ENCODE measurements at regions of chr20 and their contacts with region 1.

Region 1: DNA sequence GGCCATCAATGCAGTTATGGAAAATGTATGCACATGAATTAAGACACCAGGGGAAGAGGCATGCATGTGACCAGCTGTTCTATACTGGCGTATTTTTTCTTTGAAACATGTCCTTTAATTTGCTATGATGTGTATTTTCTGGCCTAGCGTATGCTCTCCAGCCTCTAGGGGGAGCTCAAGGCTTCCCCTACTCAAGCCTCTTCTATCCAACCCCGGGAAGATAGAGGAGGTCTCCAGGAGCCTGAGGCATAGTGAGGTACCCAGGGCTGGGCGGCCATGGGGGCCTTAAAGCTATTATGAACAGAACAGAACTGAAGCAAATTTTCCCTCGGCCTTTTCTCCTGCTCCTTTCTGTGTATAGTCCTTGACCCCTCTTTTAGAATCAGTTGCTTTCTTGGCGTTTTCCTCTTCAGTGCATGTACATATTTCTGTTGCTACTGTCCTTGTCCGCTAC is 528.9 kb downstream of the MAFB start:
- DNase-seq: peak in 1 of 2 donors; percentile 64
- ATAC-seq: peak; percentile 80
- H3K4me3 ChIP-seq: no peak overlapping the region
- H3K27ac ChIP-seq: no peak overlapping the region
- H3K4me1 ChIP-seq: no peaks in the 10 kb centered on the region
- H3K27me3 ChIP-seq: no peaks in the 10 kb centered on the region

Region 2: GRCh38 chr20:40251284-40251932 is 91.3 kb after region 1 on chr20:
- intact Hi-C with region 1: loop called (anchors 2 to 10 kb)
- DNase-seq: no peak
- ATAC-seq: no peak
- H3K4me3 ChIP-seq: no peak overlapping the region
- H3K27ac ChIP-seq: no peak overlapping the region
- H3K4me1 ChIP-seq: no peaks in the 10 kb centered on the region
- H3K27me3 ChIP-seq: no peaks in the 10 kb centered on the region

Region 3: DNA sequence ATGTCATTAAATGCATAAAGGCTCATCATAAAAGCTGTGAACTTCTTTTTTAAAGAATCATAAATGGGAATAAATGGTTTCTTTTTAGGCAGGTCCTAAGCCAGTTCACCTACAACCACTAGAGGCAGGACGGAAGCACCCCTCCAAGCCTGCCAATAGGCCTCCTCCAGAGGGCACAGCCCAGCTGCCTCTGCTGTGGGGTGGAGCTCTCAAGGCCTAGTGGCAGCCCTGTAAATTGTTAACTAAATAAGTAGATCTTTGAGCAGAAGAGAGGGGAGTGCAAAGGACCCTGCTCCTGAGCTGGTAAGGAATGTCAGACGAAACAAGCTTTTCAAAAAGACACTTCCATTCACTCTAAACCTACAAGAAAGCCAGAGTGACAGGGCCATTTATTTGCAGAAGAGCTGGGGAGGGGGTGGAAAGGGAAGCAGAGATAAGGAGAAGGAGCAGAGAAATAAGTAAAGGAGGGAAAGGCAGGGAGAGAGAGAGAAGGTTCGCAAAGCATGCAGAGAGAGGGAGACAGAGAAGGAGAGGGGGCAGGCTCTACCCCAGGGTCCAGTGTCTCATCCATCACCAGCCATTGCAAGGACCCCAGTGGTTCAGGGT is 547.0 kb after region 1 on chr20:
- intact Hi-C with region 1: no loop called
- DNase-seq: no peak
- ATAC-seq: no peak
- H3K4me3 ChIP-seq: no peak overlapping the region
- H3K27ac ChIP-seq: no peak overlapping the region
- H3K4me1 ChIP-seq: no peaks in the 10 kb centered on the region
- H3K27me3 ChIP-seq: no peaks in the 10 kb centered on the region

Measured in aorta (tissue), 5 donors.